ENCODE measurements at regions of chr10 and their contacts with region 1.

Region 1: DNA sequence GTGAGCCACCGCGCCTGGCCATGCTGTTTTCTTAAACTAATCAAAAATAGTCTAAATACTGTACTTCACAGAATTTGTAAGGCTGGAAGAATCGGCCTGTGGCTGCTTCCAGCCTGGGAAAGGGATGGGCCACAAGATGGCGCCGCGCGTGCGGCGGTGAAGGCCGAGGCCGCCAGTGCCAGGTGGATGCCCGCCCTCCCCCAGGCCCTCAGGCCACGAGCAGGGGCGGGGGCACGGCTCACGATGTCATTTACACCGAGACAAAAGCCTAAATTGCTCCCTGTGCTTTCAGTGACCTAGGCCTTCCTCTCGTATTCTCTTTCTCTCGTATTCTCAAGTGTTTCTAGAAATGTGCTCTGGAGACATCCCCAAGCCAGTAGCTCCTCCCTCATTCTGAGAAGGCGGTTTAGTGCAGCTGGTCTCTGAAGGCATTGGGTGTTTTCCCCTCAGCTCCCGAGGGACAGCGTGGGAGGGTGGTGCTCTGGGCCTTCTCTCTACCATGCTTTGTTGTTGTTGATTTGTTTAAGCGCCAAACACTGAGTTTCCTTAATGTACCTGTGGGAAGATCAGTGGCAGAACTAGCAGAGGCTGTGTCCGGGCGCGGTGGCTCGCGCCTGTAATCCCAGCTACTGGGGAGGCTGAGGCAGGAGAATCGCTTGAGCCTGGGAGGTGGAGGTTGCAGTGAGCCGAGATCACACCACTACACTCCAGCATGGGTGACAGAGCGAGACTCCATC is 68.4 kb downstream of the CDC123 start:
- DNase-seq: peak; percentile 82 to 91
- H3K4me3 ChIP-seq: peak overlapping the region; percentile 39
- H3K4me3 Mint-ChIP-seq: peak overlapping the region; percentile 73
- H3K27ac Mint-ChIP-seq: peak overlapping the region; percentile 48
- H3K4me1 ChIP-seq: peaks cover 20% of the 10 kb centered on the region
- H3K4me1 Mint-ChIP-seq: peaks cover 18% of the 10 kb centered on the region
- H3K27me3 ChIP-seq: no peaks in the 10 kb centered on the region
- H3K27me3 Mint-ChIP-seq: no peaks in the 10 kb centered on the region
- CTCF ChIP-seq: peak; percentile 91 to 92

Region 2: GRCh38 chr10:12252882-12253546 is 11.4 kb before region 1 on chr10:
- CTCF ChIA-PET with region 1: interaction called, 12 read pairs
- POLR2A ChIA-PET with region 1: no interaction called
- intact Hi-C with region 1: no loop called
- DNase-seq: peak; percentile 56 to 58
- H3K4me3 ChIP-seq: no peak overlapping the region
- H3K4me3 Mint-ChIP-seq: no peak overlapping the region
- H3K27ac Mint-ChIP-seq: no peak overlapping the region
- H3K4me1 ChIP-seq: 0 out of 2 replicates have a peak, but pooled peaks cover 3% of the 10 kb centered on the region
- H3K4me1 Mint-ChIP-seq: no peaks in the 10 kb centered on the region
- H3K27me3 ChIP-seq: no peaks in the 10 kb centered on the region
- H3K27me3 Mint-ChIP-seq: no peaks in the 10 kb centered on the region
- CTCF ChIP-seq: peak; percentile 64 to 82

Region 3: GRCh38 chr10:12319076-12319475 is 54.7 kb after region 1 on chr10:
- CTCF ChIA-PET with region 1: no interaction called
- POLR2A ChIA-PET with region 1: no interaction called
- intact Hi-C with region 1: no loop called
- DNase-seq: no peak
- H3K4me3 ChIP-seq: no peak overlapping the region
- H3K4me3 Mint-ChIP-seq: no peak overlapping the region
- H3K27ac Mint-ChIP-seq: no peak overlapping the region
- H3K4me1 ChIP-seq: no peaks in the 10 kb centered on the region
- H3K4me1 Mint-ChIP-seq: no peaks in the 10 kb centered on the region
- H3K27me3 ChIP-seq: no peaks in the 10 kb centered on the region
- H3K27me3 Mint-ChIP-seq: no peaks in the 10 kb centered on the region
- CTCF ChIP-seq: no peak

Region 4: GRCh38 chr10:12484941-12485805 is 220.8 kb after region 1 on chr10:
- CTCF ChIA-PET with region 1: interaction called, 14 read pairs
- POLR2A ChIA-PET with region 1: no interaction called
- intact Hi-C with region 1: loop called (anchors 1 kb)
- DNase-seq: peak; percentile 60 to 62
- H3K4me3 ChIP-seq: peak overlapping the region; percentile 2; the same call in 1 of the 2 replicates
- H3K4me3 Mint-ChIP-seq: peak overlapping the region; percentile 56
- H3K27ac Mint-ChIP-seq: peak overlapping the region; percentile 60
- H3K4me1 ChIP-seq: peaks cover 13% of the 10 kb centered on the region
- H3K4me1 Mint-ChIP-seq: peaks cover 22% of the 10 kb centered on the region
- H3K27me3 ChIP-seq: no peaks in the 10 kb centered on the region
- H3K27me3 Mint-ChIP-seq: no peaks in the 10 kb centered on the region
- CTCF ChIP-seq: peak; percentile 27 to 35

Region 5: GRCh38 chr10:12656518-12657142 is 392.3 kb after region 1 on chr10:
- CTCF ChIA-PET with region 1: interaction called, 57 read pairs
- POLR2A ChIA-PET with region 1: interaction called, 4 read pairs
- intact Hi-C with region 1: loop called (anchors 1 kb)
- DNase-seq: peak in 1 of 2 experiments; percentile 49
- H3K4me3 ChIP-seq: no peak overlapping the region
- H3K4me3 Mint-ChIP-seq: no peak overlapping the region
- H3K27ac Mint-ChIP-seq: no peak overlapping the region
- H3K4me1 ChIP-seq: no peaks in the 10 kb centered on the region
- H3K4me1 Mint-ChIP-seq: no peaks in the 10 kb centered on the region
- H3K27me3 ChIP-seq: no peaks in the 10 kb centered on the region
- H3K27me3 Mint-ChIP-seq: no peaks in the 10 kb centered on the region
- CTCF ChIP-seq: peak; percentile 75 to 84

Region 6: GRCh38 chr10:13074561-13075451 is 810.4 kb after region 1 on chr10:
- CTCF ChIA-PET with region 1: interaction called, 3 read pairs
- POLR2A ChIA-PET with region 1: no interaction called
- intact Hi-C with region 1: loop called (anchors 2 kb)
- DNase-seq: peak; percentile 74 to 87
- H3K4me3 ChIP-seq: no peak overlapping the region
- H3K4me3 Mint-ChIP-seq: no peak overlapping the region
- H3K27ac Mint-ChIP-seq: no peak overlapping the region
- H3K4me1 ChIP-seq: no peaks in the 10 kb centered on the region
- H3K4me1 Mint-ChIP-seq: no peaks in the 10 kb centered on the region
- H3K27me3 ChIP-seq: no peaks in the 10 kb centered on the region
- H3K27me3 Mint-ChIP-seq: peaks cover 2% of the 10 kb centered on the region
- CTCF ChIP-seq: peak; percentile 95 to 97